Mammary epithelial cell (primary cell): ENCODE measurements at regions of chr13 and their contacts with region 1.

Region 1: DNA sequence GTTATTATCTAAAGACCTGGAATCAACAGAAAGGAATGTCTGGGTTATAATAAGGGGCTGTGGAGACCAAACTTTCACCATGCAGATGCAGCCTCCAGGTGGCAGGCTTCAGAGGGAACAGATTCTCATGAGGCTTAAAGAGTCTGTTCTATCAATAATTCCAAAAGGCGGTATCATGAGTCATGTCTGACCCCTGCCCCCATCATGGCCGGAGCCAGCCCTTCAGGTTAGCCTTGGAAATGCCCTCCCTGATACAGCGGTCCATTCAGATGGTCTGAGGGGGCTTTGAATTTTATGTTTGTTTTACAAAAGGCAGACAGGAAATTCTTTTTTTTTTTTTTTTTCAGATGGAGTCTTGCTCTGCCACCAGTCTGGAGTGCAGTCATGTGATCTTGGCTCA is 21.7 kb upstream of the LAMP1 start:
- DNase-seq: peak; percentile 51
- H3K4me3 ChIP-seq: no peak overlapping the region
- H3K27ac ChIP-seq: no peak overlapping the region
- H3K4me1 ChIP-seq: peaks cover 16% of the 10 kb centered on the region
- H3K27me3 ChIP-seq: no peaks in the 10 kb centered on the region
- CTCF ChIP-seq: peak; percentile 35 to 57

Region 2: DNA sequence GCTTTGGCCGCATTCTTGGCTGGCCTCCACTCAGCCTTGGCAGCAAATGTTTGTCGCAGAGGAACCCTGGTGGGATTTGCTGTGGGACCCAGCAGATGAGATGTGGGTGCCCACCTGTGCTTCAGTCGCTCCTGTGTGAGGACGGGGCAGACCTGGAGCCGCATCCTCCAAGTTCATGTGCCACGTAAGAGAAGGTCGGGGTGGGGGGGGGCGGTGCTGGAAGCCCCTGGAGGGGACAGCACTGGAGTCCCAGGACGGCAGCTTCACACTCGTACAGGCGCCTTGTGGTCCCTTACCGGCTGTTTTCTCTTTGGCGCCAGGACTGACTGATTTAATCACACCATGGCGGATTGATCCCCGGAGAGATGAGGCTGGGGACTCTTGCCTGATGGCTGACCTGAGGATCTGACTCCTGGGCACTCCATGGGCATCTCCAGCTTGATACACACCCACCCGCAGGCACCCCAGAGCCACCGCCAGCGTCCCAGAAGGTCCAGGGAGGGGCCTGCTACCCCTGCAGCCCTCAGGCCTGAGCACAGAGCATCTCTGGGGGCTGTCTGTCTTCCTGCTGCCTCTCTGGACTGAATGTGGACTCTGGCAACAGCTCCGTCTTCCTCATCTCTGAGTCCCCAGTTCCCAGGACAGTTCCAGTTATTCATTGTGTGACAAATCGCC is 98.6 kb after region 1 on chr13:
- CTCF ChIA-PET with region 1: no interaction called
- dilution Hi-C with region 1: no loop called
- in situ Hi-C with region 1: no loop called
- intact Hi-C with region 1: loop called (anchors 1 kb)
- DNase-seq: no peak
- H3K4me3 ChIP-seq: no peak overlapping the region
- H3K27ac ChIP-seq: no peak overlapping the region
- H3K4me1 ChIP-seq: no peaks in the 10 kb centered on the region
- H3K27me3 ChIP-seq: no peaks in the 10 kb centered on the region
- CTCF ChIP-seq: no peak

Region 3: GRCh38 chr13:113393563-113394338 is 118.4 kb after region 1 on chr13:
- CTCF ChIA-PET with region 1: no interaction called
- dilution Hi-C with region 1: no loop called
- in situ Hi-C with region 1: loop called in 1 of 2 experiments (anchors 10 kb)
- intact Hi-C with region 1: loop called (anchors 1 kb)
- DNase-seq: peak; percentile 54
- H3K4me3 ChIP-seq: peak overlapping the region; percentile 39 to 58 (median 57)
- H3K27ac ChIP-seq: no peak overlapping the region
- H3K4me1 ChIP-seq: peaks cover 12% of the 10 kb centered on the region
- H3K27me3 ChIP-seq: peaks cover under 1% of the 10 kb centered on the region
- CTCF ChIP-seq: peak; percentile 45 to 62